Left cardiac atrium (tissue), 4 donors: ENCODE measurements at regions of chr9 and their contacts with region 1.

Region 1: DNA sequence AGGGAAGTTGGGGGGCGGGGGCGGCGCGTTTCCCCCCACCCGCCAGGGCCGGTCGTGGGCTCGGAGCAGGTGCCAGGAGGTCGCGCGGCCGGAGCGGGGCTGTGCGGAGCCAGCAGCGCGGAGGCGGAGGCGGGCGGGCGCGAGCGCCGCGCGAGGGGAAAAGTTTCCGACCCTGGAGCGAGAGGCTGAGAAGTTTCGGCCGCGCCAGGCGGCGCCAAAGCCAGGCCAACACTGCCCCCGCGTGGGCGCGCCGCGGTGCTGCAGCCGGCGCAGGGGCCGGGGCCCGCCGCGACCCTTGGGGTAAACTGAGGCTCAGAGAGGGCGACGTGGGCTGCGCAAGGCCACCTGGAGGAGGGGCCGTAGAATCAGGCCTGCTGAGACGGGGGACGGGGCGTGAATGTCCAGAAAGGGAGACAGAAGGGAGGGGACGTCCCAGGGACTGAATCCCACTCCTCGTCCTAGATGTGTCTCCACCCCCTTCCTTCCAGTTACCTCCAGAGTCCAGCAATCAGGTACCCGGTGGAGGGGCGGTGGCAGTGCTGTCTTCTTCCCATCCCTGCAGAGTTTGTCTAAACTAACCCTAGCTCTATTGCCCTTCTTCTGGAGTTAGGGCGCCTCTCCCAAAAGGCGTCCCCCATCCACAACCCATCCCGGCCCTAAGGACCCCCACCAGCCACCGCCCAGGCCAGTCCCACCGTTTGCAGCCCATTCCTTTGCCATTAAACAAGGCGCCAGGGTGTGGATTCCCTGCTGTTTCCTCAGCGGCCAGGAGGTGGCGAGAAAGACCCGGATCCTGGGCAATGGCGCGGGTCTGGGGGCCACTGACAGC is 10.2 kb downstream of the C9orf50 start:
- DNase-seq: peak; percentile 82
- ATAC-seq: peak; percentile 57 to 75

Region 2: GRCh38 chr9:129139993-129140396 is 470.7 kb before region 1 on chr9:
- intact Hi-C with region 1: loop called (anchors 1 to 2 kb)
- DNase-seq: peak; percentile 96
- ATAC-seq: peak; percentile 77 to 85

Region 3: GRCh38 chr9:129164246-129164930 is 446.3 kb before region 1 on chr9:
- intact Hi-C with region 1: no loop called
- DNase-seq: peak; percentile 70
- ATAC-seq: peak; percentile 52 to 54

Region 4: GRCh38 chr9:129333953-129334724 is 276.5 kb before region 1 on chr9:
- intact Hi-C with region 1: loop called in 1 of 2 experiments (anchors 10 kb)
- DNase-seq: peak; percentile 94
- ATAC-seq: peak; percentile 90 to 91

Region 5: GRCh38 chr9:129944506-129945116 is 333.9 kb after region 1 on chr9:
- intact Hi-C with region 1: no loop called
- DNase-seq: no peak
- ATAC-seq: peak; percentile 48 to 67